ENCODE measurements at regions of chr1 and their contacts with region 1.

Region 1: DNA sequence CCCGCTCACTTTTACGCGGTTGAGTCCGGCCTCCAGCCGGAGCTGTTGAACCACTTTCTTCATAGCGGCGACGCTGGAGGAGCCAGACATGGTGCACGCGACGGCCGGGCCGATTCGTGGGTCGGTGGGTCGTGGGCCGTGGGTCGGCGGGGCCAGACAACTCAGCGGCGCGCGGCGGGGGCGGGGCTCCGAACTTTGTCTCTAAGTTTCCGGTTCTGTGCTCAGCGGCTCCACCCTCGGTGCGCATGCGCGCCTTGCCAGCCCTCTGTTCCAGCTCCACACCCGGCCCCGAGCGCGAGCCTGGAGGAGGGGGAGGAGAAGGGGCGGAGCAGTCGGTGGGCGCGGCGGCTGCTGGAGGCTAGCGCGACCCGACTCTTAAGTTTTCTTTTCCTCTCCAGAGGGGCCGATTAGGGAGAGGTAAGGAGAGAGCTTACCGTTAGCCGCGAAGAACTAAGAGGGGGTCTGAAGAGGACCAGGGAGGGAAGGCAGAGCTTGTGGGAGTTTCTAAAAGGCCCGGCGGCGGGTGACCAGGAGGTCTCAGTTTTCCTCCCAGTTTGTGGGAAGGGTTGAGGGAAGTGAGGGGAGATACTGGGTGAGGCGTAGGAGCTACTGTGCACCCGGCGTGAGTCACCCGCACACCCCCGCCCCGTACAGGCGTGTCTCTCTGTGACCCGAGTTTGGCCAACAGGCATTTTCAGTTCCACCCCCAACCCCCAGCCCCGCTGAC is at the starts of genes GNG5 and SPATA1:
- H3K4me3 Mint-ChIP-seq: peak within 1 kb of the TSS; percentile 91
- H3K27ac Mint-ChIP-seq: peak within 1 kb of the TSS; percentile 98
- H3K4me1 Mint-ChIP-seq: peaks cover 37% of the 10 kb centered on the region
- H3K27me3 Mint-ChIP-seq: no peaks in the 10 kb centered on the region

Region 2: DNA sequence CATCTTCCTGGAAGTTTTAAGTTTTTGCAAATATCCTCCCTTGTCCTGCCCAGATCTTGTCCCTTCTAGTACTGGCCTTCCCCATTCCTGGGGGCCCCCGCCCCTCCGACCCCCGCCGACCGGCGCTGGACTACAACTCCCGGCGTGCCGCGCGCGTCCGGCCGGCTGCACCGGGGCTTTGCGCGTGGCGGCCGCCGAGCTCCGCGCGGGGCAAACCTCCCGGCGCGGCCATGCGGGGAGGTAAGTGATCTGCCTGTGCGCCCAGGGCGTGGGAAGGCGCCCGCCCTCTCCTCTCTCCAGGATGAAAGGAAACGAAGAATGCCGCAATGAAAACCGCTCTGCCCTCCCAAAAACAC is 207.9 kb before region 1 on chr1:
- intact Hi-C with region 1: loop called (anchors 5 kb)
- H3K4me3 Mint-ChIP-seq: peak overlapping the region; percentile 93
- H3K27ac Mint-ChIP-seq: peak overlapping the region; percentile 89
- H3K4me1 Mint-ChIP-seq: peaks cover 21% of the 10 kb centered on the region
- H3K27me3 Mint-ChIP-seq: no peaks in the 10 kb centered on the region

Region 3: GRCh38 chr1:84442256-84442655 is 63.9 kb before region 1 on chr1:
- intact Hi-C with region 1: loop called (anchors 2 kb)
- H3K4me3 Mint-ChIP-seq: no peak overlapping the region
- H3K27ac Mint-ChIP-seq: peak overlapping the region; percentile 72
- H3K4me1 Mint-ChIP-seq: peaks cover 15% of the 10 kb centered on the region
- H3K27me3 Mint-ChIP-seq: no peaks in the 10 kb centered on the region

Region 4: GRCh38 chr1:84573967-84574842 is 68.0 kb after region 1 on chr1 and contains the start of gene CTBS:
- intact Hi-C with region 1: loop called (anchors 1 kb)
- H3K4me3 Mint-ChIP-seq: peak within 1 kb of the TSS; percentile 97
- H3K27ac Mint-ChIP-seq: peak within 1 kb of the TSS; percentile 100
- H3K4me1 Mint-ChIP-seq: peaks cover 50% of the 10 kb centered on the region
- H3K27me3 Mint-ChIP-seq: no peaks in the 10 kb centered on the region

Region 5: GRCh38 chr1:84603941-84604830 is 98.0 kb after region 1 on chr1:
- intact Hi-C with region 1: no loop called
- H3K4me3 Mint-ChIP-seq: no peak overlapping the region
- H3K27ac Mint-ChIP-seq: no peak overlapping the region
- H3K4me1 Mint-ChIP-seq: peaks cover 1% of the 10 kb centered on the region
- H3K27me3 Mint-ChIP-seq: no peaks in the 10 kb centered on the region

Region 6: GRCh38 chr1:84620720-84621313 is 114.7 kb after region 1 on chr1:
- intact Hi-C with region 1: loop called (anchors 2 kb)
- H3K4me3 Mint-ChIP-seq: peak overlapping the region; percentile 88
- H3K27ac Mint-ChIP-seq: peak overlapping the region; percentile 91
- H3K4me1 Mint-ChIP-seq: peaks cover 30% of the 10 kb centered on the region
- H3K27me3 Mint-ChIP-seq: no peaks in the 10 kb centered on the region